Activated CD4-positive, alpha-beta memory T cell treated with anti-CD3 and anti-CD28 coated beads for 36 hours (primary cell): ENCODE measurements at regions of chr17 and their contacts with region 1.

Region 1: DNA sequence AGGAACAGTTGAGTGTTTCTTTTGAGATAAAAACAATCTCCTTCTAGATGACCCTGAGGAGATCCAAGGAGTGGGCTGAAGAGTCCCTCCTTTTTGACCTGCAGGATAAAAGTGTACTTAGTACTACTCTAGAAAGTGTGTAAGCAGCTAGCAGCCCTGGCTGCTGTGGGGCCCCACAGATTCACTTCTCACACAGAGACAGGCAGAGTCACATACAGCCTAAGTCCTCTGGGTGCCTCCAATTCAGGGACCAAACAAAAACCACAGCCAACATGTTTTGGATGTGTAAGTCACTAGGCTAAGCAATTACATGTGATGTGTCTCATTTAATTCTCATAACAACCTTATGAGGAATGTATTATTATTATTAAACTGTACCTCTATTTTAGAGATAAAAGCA is 97.1 kb downstream of the TMEM100 start:
- DNase-seq: peak; percentile 52
- H3K4me3 Mint-ChIP-seq: no peak overlapping the region
- H3K27ac Mint-ChIP-seq: no peak overlapping the region
- H3K4me1 Mint-ChIP-seq: peaks cover 19% of the 10 kb centered on the region
- H3K27me3 Mint-ChIP-seq: peaks cover 16% of the 10 kb centered on the region

Region 2: DNA sequence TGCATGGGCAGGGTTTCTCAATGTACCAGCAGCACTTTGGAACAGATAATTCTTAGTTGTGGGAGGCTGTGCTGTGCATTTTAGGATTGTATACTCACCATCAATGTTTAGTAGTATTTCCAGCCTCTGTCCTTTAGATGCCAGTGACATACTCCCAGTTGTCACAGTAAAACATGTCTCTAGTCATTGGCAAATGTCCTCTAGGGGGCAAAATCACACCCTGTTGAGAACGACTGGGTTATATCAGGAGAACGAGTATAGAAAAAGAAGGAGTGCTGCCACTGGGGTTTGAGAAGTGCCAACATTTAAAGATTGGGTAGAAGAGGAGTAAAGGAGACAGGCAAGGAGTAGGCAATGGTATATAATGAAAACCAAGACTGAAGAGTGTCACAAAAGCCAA is 76.4 kb before region 1 on chr17:
- CTCF ChIA-PET with region 1: no interaction called
- POLR2A ChIA-PET with region 1: no interaction called
- intact Hi-C with region 1: loop called (anchors 1 kb)
- DNase-seq: no peak
- H3K4me3 Mint-ChIP-seq: no peak overlapping the region
- H3K27ac Mint-ChIP-seq: no peak overlapping the region
- H3K4me1 Mint-ChIP-seq: peaks cover 24% of the 10 kb centered on the region
- H3K27me3 Mint-ChIP-seq: peaks cover 2% of the 10 kb centered on the region

Region 3: GRCh38 chr17:55648086-55648485 is 22.6 kb after region 1 on chr17:
- CTCF ChIA-PET with region 1: no interaction called
- POLR2A ChIA-PET with region 1: no interaction called
- intact Hi-C with region 1: no loop called
- DNase-seq: no peak
- H3K4me3 Mint-ChIP-seq: no peak overlapping the region
- H3K27ac Mint-ChIP-seq: no peak overlapping the region
- H3K4me1 Mint-ChIP-seq: no peaks in the 10 kb centered on the region
- H3K27me3 Mint-ChIP-seq: peaks cover 22% of the 10 kb centered on the region

Region 4: GRCh38 chr17:55681342-55681700 is 55.8 kb after region 1 on chr17:
- CTCF ChIA-PET with region 1: no interaction called
- POLR2A ChIA-PET with region 1: no interaction called
- intact Hi-C with region 1: no loop called
- DNase-seq: no peak
- H3K4me3 Mint-ChIP-seq: no peak overlapping the region
- H3K27ac Mint-ChIP-seq: no peak overlapping the region
- H3K4me1 Mint-ChIP-seq: no peaks in the 10 kb centered on the region
- H3K27me3 Mint-ChIP-seq: peaks cover 39% of the 10 kb centered on the region

Region 5: GRCh38 chr17:55693254-55694216 is 68.0 kb after region 1 on chr17:
- CTCF ChIA-PET with region 1: no interaction called
- POLR2A ChIA-PET with region 1: no interaction called
- intact Hi-C with region 1: no loop called
- DNase-seq: no peak
- H3K4me3 Mint-ChIP-seq: no peak overlapping the region
- H3K27ac Mint-ChIP-seq: no peak overlapping the region
- H3K4me1 Mint-ChIP-seq: no peaks in the 10 kb centered on the region
- H3K27me3 Mint-ChIP-seq: peaks cover 23% of the 10 kb centered on the region

Region 6: GRCh38 chr17:55717898-55718735 is 92.6 kb after region 1 on chr17:
- CTCF ChIA-PET with region 1: interaction called, 3 read pairs
- POLR2A ChIA-PET with region 1: no interaction called
- intact Hi-C with region 1: loop called (anchors 5 kb)
- DNase-seq: peak; percentile 74
- H3K4me3 Mint-ChIP-seq: no peak overlapping the region
- H3K27ac Mint-ChIP-seq: no peak overlapping the region
- H3K4me1 Mint-ChIP-seq: no peaks in the 10 kb centered on the region
- H3K27me3 Mint-ChIP-seq: peaks cover 25% of the 10 kb centered on the region

Region 7: GRCh38 chr17:55806745-55807495 is 181.4 kb after region 1 on chr17:
- CTCF ChIA-PET with region 1: no interaction called
- POLR2A ChIA-PET with region 1: no interaction called
- intact Hi-C with region 1: loop called (anchors 1 kb)
- DNase-seq: peak; percentile 18
- H3K4me3 Mint-ChIP-seq: no peak overlapping the region
- H3K27ac Mint-ChIP-seq: peak overlapping the region; percentile 45
- H3K4me1 Mint-ChIP-seq: peaks cover 9% of the 10 kb centered on the region
- H3K27me3 Mint-ChIP-seq: peaks cover 1% of the 10 kb centered on the region

Region 8: GRCh38 chr17:56213031-56213430 is 587.5 kb after region 1 on chr17:
- CTCF ChIA-PET with region 1: no interaction called
- POLR2A ChIA-PET with region 1: no interaction called
- intact Hi-C with region 1: no loop called
- DNase-seq: no peak
- H3K4me3 Mint-ChIP-seq: no peak overlapping the region
- H3K27ac Mint-ChIP-seq: no peak overlapping the region
- H3K4me1 Mint-ChIP-seq: no peaks in the 10 kb centered on the region
- H3K27me3 Mint-ChIP-seq: peaks cover 14% of the 10 kb centered on the region